SK-N-SH (cell line): ENCODE measurements at regions of chr10 and their contacts with region 1.

Region 1: GRCh38 chr10:122435212-122435827 is 19.1 kb upstream of the ARMS2 start:
- DNase-seq: peak; percentile 47
- H3K4me3 ChIP-seq: no peak overlapping the region; a peak in 1 of 4 replicates
- H3K27ac ChIP-seq: no peak overlapping the region
- H3K4me1 ChIP-seq: no peaks in the 10 kb centered on the region
- H3K27me3 ChIP-seq: no peaks in the 10 kb centered on the region
- CTCF ChIP-seq: peak; percentile 79
- EP300 ChIP-seq: no peak
- RAD21 ChIP-seq: peak; percentile 85

Region 2: DNA sequence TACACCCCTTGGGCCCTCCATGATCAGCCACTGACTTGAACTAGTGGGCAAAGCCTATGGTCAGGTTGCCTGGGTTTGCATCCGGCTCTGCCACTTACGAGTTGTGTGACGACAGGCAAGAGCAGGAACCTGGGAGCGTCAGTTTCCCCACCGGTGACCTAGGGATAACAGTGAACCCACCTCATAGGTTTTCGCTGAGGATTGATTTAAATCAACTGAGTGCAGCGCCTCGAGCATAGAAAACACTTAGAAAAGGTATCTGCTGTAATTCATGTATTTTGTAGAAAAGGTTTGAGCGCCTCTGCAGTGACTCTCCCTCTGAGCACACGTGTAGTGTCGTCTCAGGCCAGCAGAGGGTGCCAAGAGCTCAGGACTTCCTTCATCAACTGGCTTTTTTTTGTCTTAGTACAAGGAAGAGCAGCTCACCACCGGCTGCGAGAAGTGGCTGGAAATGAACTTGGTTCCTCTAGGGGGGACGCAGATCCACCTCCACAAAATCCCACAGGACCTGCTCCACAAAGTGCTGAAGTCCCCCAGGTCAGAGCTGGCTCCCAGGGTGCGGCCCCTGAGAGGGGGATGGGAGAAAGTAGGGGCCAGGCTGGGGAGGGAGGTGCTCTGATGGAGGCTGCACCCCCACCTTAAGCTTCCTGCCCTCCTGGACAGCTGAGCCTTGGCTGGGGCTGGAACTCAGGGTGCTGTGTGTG is 136.6 kb before region 1 on chr10:
- CTCF ChIA-PET with region 1: interaction called, 139 read pairs
- POLR2A ChIA-PET with region 1: no interaction called
- DNase-seq: peak; percentile 80
- H3K4me3 ChIP-seq: peak overlapping the region; percentile 1 to 42; a peak in 2 of 4 replicates
- H3K27ac ChIP-seq: no peak overlapping the region
- H3K4me1 ChIP-seq: no peaks in the 10 kb centered on the region; a peak in 1 of 4 replicates
- H3K27me3 ChIP-seq: no peaks in the 10 kb centered on the region; the same call in 1 of the 2 replicates
- CTCF ChIP-seq: peak; percentile 89
- EP300 ChIP-seq: no peak
- RAD21 ChIP-seq: peak; percentile 95

Region 3: DNA sequence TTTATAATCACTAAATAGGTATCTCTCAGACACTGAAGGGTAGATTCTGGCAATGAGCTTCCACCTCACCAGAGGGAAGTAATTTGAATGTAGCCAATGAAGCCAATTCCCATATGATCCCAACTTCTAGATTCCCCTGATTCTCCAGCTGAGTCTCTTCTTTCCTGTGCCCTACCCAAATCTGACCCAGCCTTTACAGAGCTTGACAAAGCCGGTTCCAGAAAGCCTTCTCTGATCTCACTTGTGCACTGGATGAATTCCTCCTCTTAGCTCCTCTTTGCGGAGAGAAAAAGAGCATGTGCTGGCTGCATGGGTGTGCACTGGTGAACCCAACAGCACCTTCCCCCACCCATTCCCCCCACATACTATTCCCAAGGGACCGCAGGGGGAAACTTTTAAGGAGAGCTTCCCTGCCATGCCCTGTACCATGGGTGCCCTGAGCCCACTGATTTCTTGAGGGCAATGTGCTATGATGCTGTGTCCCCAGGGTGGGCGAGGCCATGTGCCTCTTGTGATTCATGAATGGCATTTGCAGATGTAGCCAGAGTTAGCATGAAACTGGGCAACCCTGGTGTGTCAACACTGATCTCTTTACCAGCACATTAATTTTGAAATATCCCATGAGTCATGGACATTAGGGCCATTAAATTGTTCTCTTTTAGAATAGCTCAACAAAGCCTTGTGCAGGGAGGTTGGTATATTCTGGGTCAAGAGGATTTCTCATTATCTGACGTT is 111.2 kb before region 1 on chr10:
- CTCF ChIA-PET with region 1: interaction called, 22 read pairs
- POLR2A ChIA-PET with region 1: no interaction called
- DNase-seq: no peak
- H3K4me3 ChIP-seq: no peak overlapping the region
- H3K27ac ChIP-seq: no peak overlapping the region
- H3K4me1 ChIP-seq: no peaks in the 10 kb centered on the region
- H3K27me3 ChIP-seq: no peaks in the 10 kb centered on the region
- CTCF ChIP-seq: no peak
- EP300 ChIP-seq: no peak
- RAD21 ChIP-seq: no peak

Region 4: GRCh38 chr10:122374237-122374869 is 61.0 kb before region 1 on chr10 and contains the start of gene PLEKHA1:
- CTCF ChIA-PET with region 1: interaction called, 13 read pairs
- POLR2A ChIA-PET with region 1: no interaction called
- DNase-seq: peak; percentile 97
- H3K4me3 ChIP-seq: peak within 1 kb of the TSS; percentile 73 to 89
- H3K27ac ChIP-seq: peak within 1 kb of the TSS; percentile 70 to 84
- H3K4me1 ChIP-seq: peaks cover 2 to 5% of the 10 kb centered on the region in 2 experiments; a peak in 3 of 4 replicates
- H3K27me3 ChIP-seq: no peaks in the 10 kb centered on the region
- CTCF ChIP-seq: no peak
- EP300 ChIP-seq: no peak
- RAD21 ChIP-seq: no peak
- polyA plus RNA-seq, gene PLEKHA1: 8.4 and 10.6 TPM in 2 replicates

Region 5: GRCh38 chr10:122464586-122464985 is 29.3 kb after region 1 on chr10:
- CTCF ChIA-PET with region 1: interaction called, 10 read pairs
- POLR2A ChIA-PET with region 1: no interaction called
- DNase-seq: no peak
- H3K4me3 ChIP-seq: no peak overlapping the region
- H3K27ac ChIP-seq: no peak overlapping the region
- H3K4me1 ChIP-seq: peaks cover 8 to 16% of the 10 kb centered on the region in 2 experiments; a peak in 3 of 4 replicates
- H3K27me3 ChIP-seq: no peaks in the 10 kb centered on the region
- CTCF ChIP-seq: no peak
- EP300 ChIP-seq: no peak
- RAD21 ChIP-seq: no peak

Region 6: GRCh38 chr10:122525788-122526187 is 90.5 kb after region 1 on chr10:
- CTCF ChIA-PET with region 1: no interaction called
- POLR2A ChIA-PET with region 1: no interaction called
- DNase-seq: no peak
- H3K4me3 ChIP-seq: no peak overlapping the region
- H3K27ac ChIP-seq: no peak overlapping the region
- H3K4me1 ChIP-seq: peaks cover 0 to 4% of the 10 kb centered on the region in 2 experiments; a peak in 1 of 4 replicates
- H3K27me3 ChIP-seq: no peaks in the 10 kb centered on the region
- CTCF ChIP-seq: peak; percentile 31; the same call in 1 of the 2 replicates
- EP300 ChIP-seq: no peak
- RAD21 ChIP-seq: no peak; the same call in 1 of the 2 replicates

Region 7: DNA sequence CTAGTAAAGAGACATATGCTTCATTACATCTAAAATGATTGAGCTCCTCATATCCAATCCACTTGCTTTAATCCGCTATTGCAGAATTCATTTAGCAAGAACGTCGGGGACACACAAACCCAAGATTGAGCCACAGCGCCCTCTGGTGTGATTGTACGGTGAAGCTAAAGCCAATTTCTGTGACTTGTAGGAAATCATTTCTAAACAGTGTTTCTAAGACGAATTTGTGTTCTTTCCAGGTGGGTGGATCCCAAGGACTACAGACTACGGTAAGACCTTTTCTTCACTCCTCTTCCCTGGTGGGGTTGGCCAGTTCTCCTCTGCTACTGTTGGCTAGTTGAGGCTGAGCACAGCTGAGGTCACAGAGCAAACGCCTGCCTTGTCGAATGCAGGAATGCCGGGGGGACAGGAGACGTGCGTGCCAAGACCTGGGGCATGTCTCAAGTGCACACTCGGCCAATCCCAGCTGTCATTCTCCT is 130.4 kb after region 1 on chr10:
- CTCF ChIA-PET with region 1: interaction called, 16 read pairs
- POLR2A ChIA-PET with region 1: no interaction called
- DNase-seq: peak; percentile 61
- H3K4me3 ChIP-seq: no peak overlapping the region; a peak in 1 of 4 replicates
- H3K27ac ChIP-seq: no peak overlapping the region
- H3K4me1 ChIP-seq: peaks cover 0 to 2% of the 10 kb centered on the region in 2 experiments; a peak in 1 of 4 replicates
- H3K27me3 ChIP-seq: 0 out of 2 replicates have a peak, but pooled peaks cover 4% of the 10 kb centered on the region
- CTCF ChIP-seq: peak; percentile 90
- EP300 ChIP-seq: no peak
- RAD21 ChIP-seq: peak; percentile 90